ENCODE measurements at regions of chr2 and their contacts with region 1.

Region 1: GRCh38 chr2:75403991-75404428 is 156.7 kb downstream of the EVA1A start:
- DNase-seq: peak; percentile 61
- ATAC-seq: peak; percentile 97
- H3K4me3 ChIP-seq: no peak overlapping the region
- H3K27ac ChIP-seq: no peak overlapping the region
- H3K4me1 ChIP-seq: no peaks in the 10 kb centered on the region
- H3K27me3 ChIP-seq: no peaks in the 10 kb centered on the region
- CTCF ChIP-seq: peak; percentile 91
- EP300 ChIP-seq: no peak
- POLR2A ChIP-seq: no peak
- RAD21 ChIP-seq: peak; percentile 81

Region 2: DNA sequence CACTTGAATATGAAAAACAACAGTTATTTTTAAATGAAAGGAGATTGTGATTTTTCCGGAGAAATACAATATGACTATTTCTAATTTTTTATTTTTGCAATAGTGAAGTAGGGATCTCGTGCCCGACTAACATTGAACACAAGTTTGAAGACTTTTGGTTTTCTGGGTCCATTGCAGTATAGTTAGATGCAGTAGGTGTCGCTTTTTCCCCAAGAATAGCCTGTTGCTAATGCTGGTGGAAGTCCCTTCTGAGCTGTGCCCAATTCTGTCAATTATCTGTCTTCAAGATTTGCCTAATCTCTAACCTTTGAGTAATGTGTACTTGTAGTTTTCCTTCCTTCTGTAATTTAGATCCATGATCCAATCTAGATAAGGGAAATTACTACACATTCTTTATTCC is 713.4 kb before region 1 on chr2:
- CTCF ChIA-PET with region 1: interaction called, 7 read pairs
- POLR2A ChIA-PET with region 1: no interaction called
- in situ Hi-C with region 1: loop called (anchors 10 kb)
- intact Hi-C with region 1: no loop called
- DNase-seq: peak; percentile 64
- ATAC-seq: peak; percentile 87
- H3K4me3 ChIP-seq: no peak overlapping the region
- H3K27ac ChIP-seq: no peak overlapping the region
- H3K4me1 ChIP-seq: peaks cover 24% of the 10 kb centered on the region; the same call in 1 of the 2 replicates
- H3K27me3 ChIP-seq: 0 out of 5 replicates have a peak, but pooled peaks cover 0 to 3% of the 10 kb centered on the region in 2 experiments
- CTCF ChIP-seq: peak; percentile 92
- EP300 ChIP-seq: no peak; a peak in 1 of 4 replicates
- POLR2A ChIP-seq: no peak
- RAD21 ChIP-seq: peak; percentile 92

Region 3: DNA sequence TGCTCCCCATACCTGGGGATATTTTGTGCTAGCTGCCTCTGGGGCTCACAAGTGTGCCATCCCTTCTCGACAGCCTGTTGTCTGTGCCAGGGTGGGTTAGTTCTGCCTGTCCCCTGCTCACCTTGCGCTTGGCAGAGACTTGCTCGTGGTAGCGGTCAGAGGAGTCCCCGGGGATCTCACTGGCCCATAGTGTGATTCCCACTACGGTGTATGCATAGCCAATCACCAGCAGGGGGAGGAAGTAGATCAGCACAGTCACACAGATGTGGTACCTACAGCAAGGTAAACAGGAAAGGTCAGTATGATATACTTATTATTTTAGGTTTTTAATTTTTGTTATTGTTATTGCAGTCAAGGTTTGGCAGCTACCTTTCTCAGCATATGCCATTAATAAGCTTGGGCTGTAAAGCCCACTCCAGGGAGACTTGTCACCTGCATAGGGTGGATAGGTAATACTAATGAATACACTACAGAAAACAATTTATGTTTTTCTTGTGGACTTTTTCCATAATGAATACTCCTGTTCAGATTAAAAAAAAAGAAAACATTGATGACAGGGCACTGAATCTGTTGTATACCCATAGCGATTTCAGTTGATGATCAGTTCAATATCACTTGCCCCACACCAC is 350.4 kb before region 1 on chr2:
- CTCF ChIA-PET with region 1: interaction called, 12 read pairs
- POLR2A ChIA-PET with region 1: no interaction called
- in situ Hi-C with region 1: no loop called
- intact Hi-C with region 1: loop called (anchors 1 kb)
- DNase-seq: peak; percentile 65
- ATAC-seq: peak; percentile 100
- H3K4me3 ChIP-seq: no peak overlapping the region
- H3K27ac ChIP-seq: no peak overlapping the region
- H3K4me1 ChIP-seq: no peaks in the 10 kb centered on the region
- H3K27me3 ChIP-seq: no peaks in the 10 kb centered on the region
- CTCF ChIP-seq: peak; percentile 88
- EP300 ChIP-seq: no peak
- POLR2A ChIP-seq: no peak
- RAD21 ChIP-seq: 0 out of 2 replicates have a peak, but pooled peaks have one; percentile 27

Region 4: GRCh38 chr2:75199428-75200011 is 204.5 kb before region 1 on chr2 and contains the start of gene TACR1:
- CTCF ChIA-PET with region 1: no interaction called
- POLR2A ChIA-PET with region 1: no interaction called
- in situ Hi-C with region 1: no loop called
- intact Hi-C with region 1: loop called (anchors 1 kb)
- DNase-seq: peak; percentile 41
- ATAC-seq: peak; percentile 84
- H3K4me3 ChIP-seq: peak within 1 kb of the TSS; percentile 12 to 55 (median 34); a peak in 2 of 6 replicates
- H3K27ac ChIP-seq: no peak within 1 kb of the TSS
- H3K4me1 ChIP-seq: peaks cover 20% of the 10 kb centered on the region
- H3K27me3 ChIP-seq: peaks cover 14 to 55% of the 10 kb centered on the region in 2 experiments; a peak in 4 of 5 replicates
- CTCF ChIP-seq: peak; percentile 84
- EP300 ChIP-seq: no peak
- POLR2A ChIP-seq: no peak
- RAD21 ChIP-seq: peak; percentile 60; the same call in 1 of the 2 replicates
- total RNA-seq, gene TACR1: not detected in 2 replicates

Region 5: GRCh38 chr2:75317316-75317715 is 86.7 kb before region 1 on chr2:
- CTCF ChIA-PET with region 1: no interaction called
- POLR2A ChIA-PET with region 1: no interaction called
- in situ Hi-C with region 1: loop called (anchors 5 kb)
- intact Hi-C with region 1: loop called (anchors 1 kb)
- DNase-seq: no peak
- ATAC-seq: no peak
- H3K4me3 ChIP-seq: no peak overlapping the region
- H3K27ac ChIP-seq: no peak overlapping the region
- H3K4me1 ChIP-seq: no peaks in the 10 kb centered on the region
- H3K27me3 ChIP-seq: peaks cover 0 to 9% of the 10 kb centered on the region in 2 experiments; a peak in 3 of 5 replicates
- CTCF ChIP-seq: no peak
- EP300 ChIP-seq: no peak
- POLR2A ChIP-seq: no peak
- RAD21 ChIP-seq: no peak

Region 6: GRCh38 chr2:75416420-75417342 is 12.7 kb after region 1 on chr2:
- CTCF ChIA-PET with region 1: no interaction called
- POLR2A ChIA-PET with region 1: no interaction called
- in situ Hi-C with region 1: no loop called
- intact Hi-C with region 1: no loop called
- DNase-seq: no peak
- ATAC-seq: peak; percentile 75
- H3K4me3 ChIP-seq: no peak overlapping the region
- H3K27ac ChIP-seq: no peak overlapping the region
- H3K4me1 ChIP-seq: peaks cover 16% of the 10 kb centered on the region
- H3K27me3 ChIP-seq: peaks cover 0 to 28% of the 10 kb centered on the region in 2 experiments
- CTCF ChIP-seq: no peak
- EP300 ChIP-seq: no peak
- POLR2A ChIP-seq: no peak
- RAD21 ChIP-seq: no peak